Endothelial cell of umbilical vein (primary cell): ENCODE measurements at regions of chr2 and their contacts with region 1.

Region 1: DNA sequence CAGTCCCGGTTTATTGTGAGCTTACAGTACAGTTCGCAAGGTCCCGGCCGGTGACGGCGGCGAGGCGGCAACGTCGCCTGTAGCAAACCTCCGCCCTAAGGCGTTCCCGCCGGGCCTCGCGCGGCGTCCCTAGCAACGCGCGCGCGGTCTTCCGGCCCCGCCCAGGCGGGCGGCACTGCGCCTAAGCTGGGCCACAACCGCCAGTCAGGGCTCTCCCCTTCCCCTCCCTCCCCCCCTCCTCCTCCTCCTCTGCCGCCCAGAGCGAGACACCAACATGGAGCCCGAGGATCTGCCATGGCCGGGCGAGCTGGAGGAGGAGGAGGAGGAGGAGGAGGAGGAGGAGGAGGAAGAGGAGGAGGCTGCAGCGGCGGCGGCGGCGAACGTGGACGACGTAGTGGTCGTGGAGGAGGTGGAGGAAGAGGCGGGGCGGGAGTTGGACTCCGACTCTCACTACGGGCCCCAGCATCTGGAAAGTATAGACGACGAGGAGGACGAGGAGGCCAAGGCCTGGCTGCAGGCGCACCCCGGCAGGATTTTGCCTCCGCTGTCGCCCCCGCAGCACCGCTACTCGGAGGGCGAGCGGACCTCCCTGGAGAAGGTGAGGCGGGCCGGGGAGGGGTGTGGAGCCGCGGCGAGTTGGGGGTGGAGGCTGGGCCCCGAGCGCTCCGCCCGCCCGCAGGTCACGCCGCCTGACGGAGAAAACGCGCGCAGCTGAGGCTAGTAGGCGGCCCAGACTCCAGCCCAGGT is at the start of gene ALMS1:
- DNase-seq: peak; percentile 89
- H3K4me3 ChIP-seq: peak within 1 kb of the TSS; percentile 71 to 86 (median 84)
- H3K27ac ChIP-seq: peak within 1 kb of the TSS; percentile 43
- H3K4me1 ChIP-seq: peaks cover 6% of the 10 kb centered on the region
- H3K27me3 ChIP-seq: peaks cover 15 to 21% of the 10 kb centered on the region in 2 experiments
- CTCF ChIP-seq: peak in 1 of 2 donors; percentile 13
- POLR2A ChIP-seq: no peak
- total RNA-seq, gene ALMS1: 14.7 and 15.4 TPM in 2 replicates

Region 2: DNA sequence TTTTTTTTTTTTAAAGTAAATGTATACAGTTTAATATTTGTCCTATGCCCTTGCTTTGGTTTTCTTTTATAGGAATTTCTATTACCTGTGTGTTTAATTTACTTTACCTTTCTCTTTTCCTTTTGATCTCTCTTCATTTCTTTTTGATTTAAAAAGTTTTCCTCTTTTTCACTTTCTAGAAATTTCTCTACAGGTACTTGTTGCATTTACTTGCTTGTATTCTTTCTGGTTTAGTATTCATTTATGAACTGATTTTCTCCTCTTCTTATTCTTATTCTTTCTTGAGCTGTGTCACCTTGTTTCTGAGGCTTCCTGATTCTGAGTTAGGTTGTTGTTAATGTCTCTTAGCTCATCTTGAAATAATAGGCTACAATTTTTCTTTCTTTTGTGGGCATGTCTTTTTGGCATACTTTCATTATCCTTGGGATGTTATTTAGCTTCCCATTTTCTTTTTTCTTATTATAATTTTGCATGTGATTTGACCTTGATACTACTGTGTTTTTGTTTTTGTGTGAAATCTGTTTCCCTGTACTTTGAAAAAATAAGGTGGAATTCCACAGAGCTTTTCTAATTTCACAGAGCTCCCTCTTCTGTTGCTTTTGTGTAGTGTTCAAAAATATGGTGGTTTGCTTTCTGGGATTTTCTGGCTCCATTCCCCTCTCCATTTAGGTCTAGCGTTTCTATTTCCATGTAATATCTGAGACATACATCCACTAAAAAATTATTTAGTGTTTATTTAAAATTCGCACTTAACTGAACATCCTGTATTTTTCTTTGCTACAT is 25.7 kb before region 1 on chr2:
- CTCF ChIA-PET with region 1: interaction called, 13 read pairs
- POLR2A ChIA-PET with region 1: no interaction called
- dilution Hi-C with region 1: no loop called
- intact Hi-C with region 1: no loop called
- DNase-seq: peak; percentile 10
- H3K4me3 ChIP-seq: no peak overlapping the region
- H3K27ac ChIP-seq: no peak overlapping the region
- H3K4me1 ChIP-seq: no peaks in the 10 kb centered on the region
- H3K27me3 ChIP-seq: peaks cover 6 to 8% of the 10 kb centered on the region in 2 experiments
- CTCF ChIP-seq: peak; percentile 18 to 27
- POLR2A ChIP-seq: no peak